ENCODE measurements at regions of chr12 and their contacts with region 1.

Region 1: GRCh38 chr12:46661110-46661845 is 164.5 kb downstream of the SLC38A4 start:
- DNase-seq: peak in 2 of 5 donors; percentile 24 to 29
- ATAC-seq: peak; percentile 57 to 83 (median 82)
- H3K4me3 ChIP-seq: no peak overlapping the region
- H3K27ac ChIP-seq: peak overlapping the region in 7 of 12 donors; percentile 49 to 77 (median 68)
- H3K4me1 ChIP-seq: peaks cover 2 to 59% (median 40%) of the 10 kb centered on the region in 12 donors
- H3K27me3 ChIP-seq: no peaks in the 10 kb centered on the region
- CTCF ChIP-seq: peak; percentile 70 to 91 (median 83)
- POLR2A ChIP-seq: no peak

Region 2: DNA sequence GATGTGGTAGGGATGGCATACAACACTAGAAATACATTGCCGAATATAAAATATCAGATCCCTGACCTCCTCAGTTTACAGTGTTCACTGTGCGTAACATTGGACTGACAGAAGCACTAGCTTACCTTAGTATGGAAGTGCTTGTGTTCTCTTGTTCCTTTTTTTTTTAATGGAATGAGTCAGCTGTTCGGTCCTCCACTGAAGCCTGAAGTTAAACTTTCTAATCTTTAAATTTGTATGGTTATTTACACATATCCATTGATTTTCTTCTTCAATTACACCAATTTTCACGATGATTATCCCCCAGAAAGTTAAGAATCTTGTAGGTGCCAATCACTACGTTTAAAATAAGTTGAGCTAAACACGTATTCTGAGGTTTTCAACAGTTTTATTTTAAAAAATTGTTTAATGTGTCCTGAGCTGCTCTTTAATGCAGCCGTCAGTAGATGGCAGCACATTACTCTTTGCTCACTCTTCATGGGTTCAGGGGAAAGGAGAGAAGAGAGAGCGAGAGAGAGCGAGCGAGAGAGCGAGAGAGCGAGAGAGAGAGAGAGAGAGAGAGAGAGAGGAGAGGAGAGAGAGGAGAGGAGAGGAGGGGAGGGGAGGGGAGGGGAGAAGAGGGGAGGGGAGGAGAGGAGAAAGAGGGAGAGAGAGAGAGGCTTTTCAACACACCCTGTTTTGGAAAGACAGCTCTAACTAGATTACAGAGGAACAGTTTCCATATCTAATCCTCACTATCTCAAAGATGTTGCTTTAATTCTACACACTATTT is 536.2 kb before region 1 on chr12:
- intact Hi-C with region 1: loop called in 5 of 10 experiments (anchors 5 to 10 kb)
- DNase-seq: peak in 3 of 5 donors; percentile 35 to 44 (median 36)
- ATAC-seq: peak; percentile 85 to 92 (median 91)
- H3K4me3 ChIP-seq: peak overlapping the region in 3 of 12 donors; percentile 22 to 38 (median 25)
- H3K27ac ChIP-seq: peak overlapping the region in 1 of 12 donors; percentile 27
- H3K4me1 ChIP-seq: peaks cover 0 to 14% (median 2%) of the 10 kb centered on the region in 12 donors
- H3K27me3 ChIP-seq: peaks cover 0 to 5% (median 0%) of the 10 kb centered on the region in 9 donors
- CTCF ChIP-seq: peak; percentile 23 to 77 (median 60)
- POLR2A ChIP-seq: no peak

Region 3: GRCh38 chr12:46342562-46343033 is 318.7 kb before region 1 on chr12:
- intact Hi-C with region 1: loop called in 7 of 10 experiments (anchors 2 to 10 kb)
- DNase-seq: peak in 2 of 5 donors; percentile 14 to 31
- ATAC-seq: peak in 3 of 4 donors; percentile 75 to 83 (median 78)
- H3K4me3 ChIP-seq: no peak overlapping the region
- H3K27ac ChIP-seq: no peak overlapping the region
- H3K4me1 ChIP-seq: peaks cover 0 to 6% (median 0%) of the 10 kb centered on the region in 12 donors
- H3K27me3 ChIP-seq: no peaks in the 10 kb centered on the region
- CTCF ChIP-seq: peak; percentile 50 to 81 (median 70)
- POLR2A ChIP-seq: no peak

Region 4: GRCh38 chr12:46364777-46365580 is 296.3 kb before region 1 on chr12:
- intact Hi-C with region 1: loop called in 7 of 10 experiments (anchors 5 to 10 kb)
- DNase-seq: peak in 4 of 5 donors; percentile 60 to 72 (median 66)
- ATAC-seq: peak; percentile 57 to 70 (median 62)
- H3K4me3 ChIP-seq: peak overlapping the region in 7 of 12 donors; percentile 0 to 34 (median 14)
- H3K27ac ChIP-seq: peak overlapping the region in 10 of 12 donors; percentile 14 to 55 (median 37)
- H3K4me1 ChIP-seq: peaks cover 10 to 96% (median 73%) of the 10 kb centered on the region in 12 donors
- H3K27me3 ChIP-seq: no peaks in the 10 kb centered on the region
- CTCF ChIP-seq: no peak
- POLR2A ChIP-seq: no peak

Region 5: GRCh38 chr12:46473634-46474329 is 187.5 kb before region 1 on chr12:
- intact Hi-C with region 1: loop called in 2 of 10 experiments (anchors 5 kb)
- DNase-seq: peak; percentile 70 to 79 (median 78)
- ATAC-seq: peak; percentile 70 to 92 (median 92)
- H3K4me3 ChIP-seq: peak overlapping the region in 2 of 12 donors; percentile 6 to 12
- H3K27ac ChIP-seq: peak overlapping the region; percentile 56 to 92 (median 83)
- H3K4me1 ChIP-seq: peaks cover 0 to 48% (median 28%) of the 10 kb centered on the region in 12 donors
- H3K27me3 ChIP-seq: no peaks in the 10 kb centered on the region
- CTCF ChIP-seq: no peak
- POLR2A ChIP-seq: no peak

Region 6: GRCh38 chr12:46534327-46534840 is 126.9 kb before region 1 on chr12:
- intact Hi-C with region 1: loop called in 3 of 10 experiments (anchors 5 to 10 kb)
- DNase-seq: no peak
- ATAC-seq: peak in 3 of 4 donors; percentile 42 to 65 (median 44)
- H3K4me3 ChIP-seq: no peak overlapping the region
- H3K27ac ChIP-seq: peak overlapping the region in 8 of 12 donors; percentile 2 to 48 (median 36)
- H3K4me1 ChIP-seq: peaks cover 0 to 50% (median 21%) of the 10 kb centered on the region in 12 donors
- H3K27me3 ChIP-seq: no peaks in the 10 kb centered on the region
- CTCF ChIP-seq: no peak
- POLR2A ChIP-seq: no peak

Region 7: DNA sequence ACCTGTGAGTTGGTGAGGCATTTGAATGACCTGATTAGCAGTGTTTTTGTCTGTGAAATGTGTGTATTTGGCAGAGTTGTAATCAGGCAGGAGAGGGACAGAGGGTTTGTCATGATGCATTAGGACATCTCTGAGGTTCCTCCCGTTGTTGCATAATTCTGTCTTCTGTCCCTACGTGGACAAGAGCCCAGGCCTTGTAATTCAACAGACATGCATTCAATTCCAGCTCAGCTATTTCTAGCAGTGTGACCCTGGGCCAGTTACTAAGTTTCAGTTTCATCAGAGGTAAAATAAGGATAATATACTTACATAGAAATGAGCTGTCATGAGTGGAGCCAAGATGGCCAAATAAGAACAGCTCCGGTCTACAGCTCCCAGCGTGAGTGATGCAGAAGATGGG is 44.1 kb before region 1 on chr12:
- intact Hi-C with region 1: no loop called
- DNase-seq: peak in 4 of 5 donors; percentile 20 to 54 (median 44)
- ATAC-seq: peak; percentile 95 to 100 (median 99)
- H3K4me3 ChIP-seq: no peak overlapping the region
- H3K27ac ChIP-seq: peak overlapping the region in 10 of 12 donors; percentile 1 to 72 (median 46)
- H3K4me1 ChIP-seq: peaks cover 0 to 17% (median 1%) of the 10 kb centered on the region in 12 donors
- H3K27me3 ChIP-seq: no peaks in the 10 kb centered on the region
- CTCF ChIP-seq: no peak
- POLR2A ChIP-seq: no peak

Measured in heart left ventricle (tissue), 16 donors.